Calu3 (cell line): ENCODE measurements at regions of chr6 and their contacts with region 1.

Region 1: DNA sequence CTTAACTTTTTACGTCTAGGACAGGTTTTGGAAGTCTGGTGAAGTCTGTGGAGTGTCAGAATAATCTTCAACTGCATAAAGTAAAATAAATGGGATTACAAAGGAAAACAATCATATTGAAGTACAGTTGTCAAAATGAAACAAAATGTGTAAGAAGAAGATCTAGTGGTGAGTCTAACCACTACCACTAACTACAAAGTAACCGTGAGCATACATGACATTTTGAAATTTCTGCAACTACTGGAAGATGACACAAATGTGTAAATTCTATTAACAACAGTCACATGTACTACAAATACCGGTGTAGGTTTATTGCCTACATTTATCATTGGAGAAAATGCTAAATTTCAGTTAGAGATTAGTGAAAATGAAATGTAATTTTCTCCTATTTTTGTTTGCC is 29.7 kb downstream of the VPS52 start:
- DNase-seq: no peak
- H3K4me3 Mint-ChIP-seq: no peak overlapping the region
- H3K27ac Mint-ChIP-seq: no peak overlapping the region
- H3K4me1 Mint-ChIP-seq: no peaks in the 10 kb centered on the region
- H3K27me3 Mint-ChIP-seq: peaks cover 73% of the 10 kb centered on the region
- CTCF ChIP-seq: no peak

Region 2: DNA sequence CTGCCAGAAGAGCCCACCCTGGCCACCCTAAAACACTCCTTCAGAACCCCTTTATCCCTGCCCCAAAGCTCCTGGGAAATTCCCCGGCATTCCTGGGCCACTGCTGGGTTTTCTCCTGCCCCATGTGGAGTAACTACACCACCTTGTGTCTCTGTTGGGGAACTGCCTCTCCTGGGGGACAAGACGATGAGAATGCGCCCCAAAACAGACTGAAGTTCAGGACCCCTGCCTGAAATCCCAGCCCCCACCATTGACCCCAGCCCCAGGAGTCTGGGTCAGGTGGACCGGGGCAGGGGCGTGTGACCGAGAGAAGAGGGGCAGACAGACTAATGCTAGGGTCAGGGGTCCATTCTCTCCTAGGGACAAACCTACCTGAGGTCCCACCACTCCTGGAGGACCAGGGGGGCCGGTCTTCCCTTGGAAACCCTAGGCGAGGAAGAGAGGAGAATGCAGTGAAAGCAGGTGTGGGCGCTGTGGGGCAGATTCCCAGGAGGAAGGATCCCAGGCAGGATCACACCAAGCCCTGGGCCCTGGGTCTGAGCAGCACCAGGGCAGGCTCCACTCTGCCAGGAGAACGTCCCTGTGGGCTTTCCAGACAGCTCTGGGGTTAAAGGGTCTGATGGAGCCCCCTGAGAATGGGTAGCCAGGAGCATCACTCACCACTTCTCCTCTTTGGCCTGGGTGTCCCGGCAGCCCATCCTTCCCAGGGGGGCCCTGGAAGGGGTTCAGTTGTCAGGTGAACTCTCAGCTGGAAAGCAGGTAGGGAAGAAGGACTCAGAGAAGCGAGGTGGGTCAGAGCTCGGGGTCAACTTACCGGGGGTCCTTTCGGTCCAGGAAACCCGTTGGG is 69.1 kb before region 1 on chr6:
- CTCF ChIA-PET with region 1: interaction called, 13 read pairs
- intact Hi-C with region 1: no loop called
- DNase-seq: peak; percentile 69
- H3K4me3 Mint-ChIP-seq: no peak overlapping the region
- H3K27ac Mint-ChIP-seq: peak overlapping the region; percentile 25
- H3K4me1 Mint-ChIP-seq: peaks cover 9% of the 10 kb centered on the region
- H3K27me3 Mint-ChIP-seq: peaks cover 89% of the 10 kb centered on the region
- CTCF ChIP-seq: peak; percentile 80

Region 3: DNA sequence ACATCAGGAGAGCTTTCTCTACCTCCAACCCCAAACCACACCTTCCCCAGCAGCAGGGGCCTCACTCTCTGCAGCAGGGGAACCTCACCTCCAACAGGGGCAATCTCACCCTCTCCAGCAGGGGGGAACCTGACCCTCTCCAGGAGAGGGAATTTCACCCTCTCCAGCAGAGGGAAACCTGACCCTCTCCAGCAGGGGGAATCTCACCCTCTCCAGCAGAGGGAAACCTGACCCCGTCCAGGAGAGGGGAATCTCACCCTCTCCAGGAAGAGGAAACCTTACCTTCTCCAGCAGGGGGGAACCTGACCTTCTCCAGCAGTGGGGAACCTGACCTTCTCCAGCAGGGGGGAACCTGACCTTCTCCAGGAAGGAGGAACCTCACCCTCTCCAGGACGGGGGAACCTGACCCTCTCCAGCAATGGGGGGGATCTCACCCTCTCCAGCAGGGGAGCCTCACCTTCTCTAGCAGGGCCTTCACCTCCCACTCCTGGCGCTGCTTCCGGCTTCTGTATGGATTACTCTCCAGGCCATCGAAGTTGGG is 38.1 kb after region 1 on chr6:
- CTCF ChIA-PET with region 1: no interaction called
- intact Hi-C with region 1: no loop called
- DNase-seq: peak; percentile 86
- H3K4me3 Mint-ChIP-seq: no peak overlapping the region
- H3K27ac Mint-ChIP-seq: peak overlapping the region; percentile 62
- H3K4me1 Mint-ChIP-seq: peaks cover 31% of the 10 kb centered on the region
- H3K27me3 Mint-ChIP-seq: no peaks in the 10 kb centered on the region
- CTCF ChIP-seq: peak; percentile 98